HepG2 (cell line): ENCODE measurements at regions of chr14 and their contacts with region 1.

Region 1: DNA sequence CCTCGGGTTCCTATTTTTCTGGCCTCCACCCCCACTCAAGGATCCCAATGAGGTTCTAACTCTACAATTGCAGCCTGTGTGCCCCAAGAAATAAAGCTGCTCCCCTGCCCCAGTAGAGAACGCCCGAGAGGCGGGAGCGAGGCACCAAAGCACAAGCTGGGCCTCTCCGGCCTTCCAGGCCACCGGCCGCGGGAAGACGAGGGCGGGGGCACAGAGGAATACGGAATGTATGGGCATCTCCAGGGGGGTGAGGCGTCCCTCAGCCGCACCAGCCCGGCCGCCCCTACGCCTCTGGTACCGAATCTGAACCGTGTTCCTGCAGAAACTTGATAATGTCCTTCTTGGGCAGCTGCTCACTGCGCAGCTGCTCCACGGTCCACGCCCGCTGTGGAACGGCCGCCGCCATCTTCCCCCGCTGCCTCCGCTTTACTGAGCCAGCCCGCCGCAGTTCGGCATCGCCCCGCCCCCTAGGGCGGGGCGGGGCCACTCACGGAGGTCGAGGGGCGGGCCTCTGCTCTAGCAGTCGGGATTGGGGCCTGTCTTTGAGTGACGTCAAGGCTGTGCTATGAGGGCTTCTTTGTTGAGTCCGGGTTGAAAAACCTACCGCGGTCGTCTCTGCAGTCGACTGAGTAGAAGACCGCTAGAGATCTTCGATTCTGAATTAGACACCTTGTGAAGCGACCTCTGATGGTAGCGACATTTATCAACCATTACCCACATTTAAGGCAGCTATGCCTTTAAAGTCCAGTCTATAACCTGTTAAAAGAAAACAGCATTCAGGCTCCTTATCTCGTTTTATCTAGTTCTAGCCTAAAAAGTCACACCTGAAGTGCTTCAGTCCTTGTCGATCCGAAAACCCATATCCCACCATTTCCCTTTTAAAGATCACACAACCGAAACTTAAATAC is at the start of gene FKBP3:
- DNase-seq: peak; percentile 99
- ATAC-seq: peak; percentile 90
- H3K4me3 ChIP-seq: peak within 1 kb of the TSS; percentile 87 to 95 (median 91)
- H3K27ac ChIP-seq: peak within 1 kb of the TSS; percentile 90
- H3K4me1 ChIP-seq: peaks cover 45% of the 10 kb centered on the region
- H3K27me3 ChIP-seq: no peaks in the 10 kb centered on the region; a peak in 2 of 5 replicates
- CTCF ChIP-seq: peak; percentile 60
- EP300 ChIP-seq: peak; percentile 5 to 14; a peak in 2 of 4 replicates
- POLR2A ChIP-seq: peak; percentile 83 to 89
- RAD21 ChIP-seq: 0 out of 2 replicates have a peak, but pooled peaks have one; percentile 22
- total RNA-seq, gene FKBP3: 87.6 and 140 TPM in 2 replicates

Region 2: DNA sequence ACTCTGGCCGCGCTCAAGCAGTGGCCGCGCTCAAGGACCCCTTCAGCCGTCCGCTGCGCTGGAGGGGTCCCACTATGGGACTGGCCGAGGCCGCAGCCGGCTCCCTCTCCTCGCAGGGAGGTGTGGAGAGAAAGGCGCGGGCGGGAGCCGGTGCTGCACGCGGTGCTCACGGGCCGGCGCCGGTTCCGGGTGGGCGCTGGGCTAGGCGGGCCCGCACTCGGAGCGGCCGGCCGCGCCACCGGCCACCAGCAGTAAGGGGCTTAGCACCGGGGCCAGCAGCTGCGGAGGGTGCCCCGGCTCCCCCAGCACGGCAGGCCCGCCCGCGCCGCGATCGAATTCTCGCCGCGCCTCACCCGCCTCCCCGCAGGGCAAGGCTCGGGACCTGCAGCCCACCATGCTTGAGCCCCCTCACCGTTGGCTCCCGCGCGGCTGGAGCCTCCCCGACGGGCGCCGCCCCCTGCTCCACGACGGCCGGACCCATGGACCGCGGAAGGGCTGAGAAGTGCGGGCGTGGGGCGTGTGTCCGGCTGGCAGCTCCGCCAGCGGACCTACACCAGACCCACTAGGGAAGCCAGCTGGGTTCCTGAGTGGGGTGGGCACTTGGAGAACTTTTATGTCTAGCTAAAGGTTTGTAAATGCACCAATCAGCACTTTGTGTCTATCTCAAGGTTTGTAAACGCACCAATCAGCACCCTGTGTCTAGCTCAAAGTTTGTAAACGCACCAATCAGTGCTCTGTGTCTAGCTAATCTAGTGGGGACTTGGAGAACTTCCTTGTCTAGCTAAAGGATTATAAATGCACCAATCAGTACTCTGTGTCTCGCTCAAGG is 222.1 kb before region 1 on chr14:
- CTCF ChIA-PET with region 1: no interaction called
- POLR2A ChIA-PET with region 1: interaction called, 23 read pairs
- in situ Hi-C with region 1: no loop called
- intact Hi-C with region 1: loop called (anchors 1 kb)
- DNase-seq: no peak
- ATAC-seq: no peak
- H3K4me3 ChIP-seq: no peak overlapping the region
- H3K27ac ChIP-seq: no peak overlapping the region
- H3K4me1 ChIP-seq: peaks cover 12% of the 10 kb centered on the region
- H3K27me3 ChIP-seq: no peaks in the 10 kb centered on the region; a peak in 1 of 5 replicates
- CTCF ChIP-seq: no peak
- EP300 ChIP-seq: no peak
- POLR2A ChIP-seq: no peak
- RAD21 ChIP-seq: no peak

Region 3: DNA sequence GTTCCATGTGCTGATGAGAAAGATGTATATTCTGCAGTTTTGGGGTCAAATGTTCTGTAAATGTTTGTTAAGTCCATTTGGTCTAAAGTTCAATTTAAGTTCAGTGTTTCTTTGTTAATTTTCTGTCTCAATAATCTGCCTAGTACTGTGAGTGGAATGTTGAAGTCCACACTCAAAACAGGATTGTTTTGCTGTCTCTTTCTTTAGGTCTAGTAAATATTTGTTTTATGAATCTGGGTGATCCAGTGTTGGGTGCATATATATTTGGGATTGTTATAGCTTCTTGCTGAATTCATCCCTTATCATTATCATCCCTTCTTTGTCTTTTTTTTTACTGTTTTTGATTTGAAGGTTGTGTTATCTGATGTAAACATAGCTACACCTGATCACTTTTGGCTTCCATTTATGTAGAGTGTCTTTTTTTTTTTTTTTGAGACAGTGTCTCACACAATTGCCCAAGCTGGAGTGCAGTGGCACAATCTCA is 76.4 kb before region 1 on chr14:
- CTCF ChIA-PET with region 1: no interaction called
- POLR2A ChIA-PET with region 1: no interaction called
- in situ Hi-C with region 1: no loop called
- intact Hi-C with region 1: loop called (anchors 2 kb)
- DNase-seq: peak; percentile 82
- ATAC-seq: peak; percentile 96
- H3K4me3 ChIP-seq: no peak overlapping the region; a peak in 1 of 6 replicates
- H3K27ac ChIP-seq: peak overlapping the region; percentile 55
- H3K4me1 ChIP-seq: peaks cover 34% of the 10 kb centered on the region
- H3K27me3 ChIP-seq: no peaks in the 10 kb centered on the region
- CTCF ChIP-seq: no peak
- EP300 ChIP-seq: peak in 1 of 2 experiments; percentile 59; a peak in 1 of 4 replicates
- POLR2A ChIP-seq: no peak
- RAD21 ChIP-seq: no peak

Region 4: GRCh38 chr14:45112889-45113781 is 21.2 kb before region 1 on chr14:
- CTCF ChIA-PET with region 1: no interaction called
- POLR2A ChIA-PET with region 1: interaction called, 16 read pairs
- in situ Hi-C with region 1: no loop called
- intact Hi-C with region 1: loop called (anchors 2 kb)
- DNase-seq: peak; percentile 53
- ATAC-seq: peak; percentile 76
- H3K4me3 ChIP-seq: no peak overlapping the region; a peak in 1 of 6 replicates
- H3K27ac ChIP-seq: peak overlapping the region; percentile 35
- H3K4me1 ChIP-seq: peaks cover 34% of the 10 kb centered on the region
- H3K27me3 ChIP-seq: no peaks in the 10 kb centered on the region
- CTCF ChIP-seq: no peak
- EP300 ChIP-seq: no peak
- POLR2A ChIP-seq: no peak
- RAD21 ChIP-seq: no peak

Region 5: DNA sequence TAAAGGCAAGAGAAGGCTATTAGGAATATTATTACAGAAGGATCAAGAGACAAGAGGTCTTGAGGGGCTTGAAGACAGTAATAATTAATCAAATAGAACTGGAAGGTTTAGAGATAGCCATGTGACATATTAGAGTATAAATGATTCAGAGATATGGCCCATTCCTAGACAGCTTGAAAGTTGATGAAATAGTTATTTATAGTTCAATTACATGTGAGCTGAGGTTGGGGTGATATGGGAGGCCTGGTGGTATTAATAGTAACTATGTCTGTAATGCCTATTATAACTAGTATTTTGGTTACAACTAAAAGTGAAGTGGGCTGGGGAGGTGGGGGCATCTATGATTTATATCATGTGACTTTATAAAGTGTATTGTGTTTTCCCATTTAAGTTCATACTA is 132.8 kb after region 1 on chr14:
- CTCF ChIA-PET with region 1: no interaction called
- POLR2A ChIA-PET with region 1: no interaction called
- in situ Hi-C with region 1: no loop called
- intact Hi-C with region 1: loop called (anchors 5 kb)
- DNase-seq: no peak
- ATAC-seq: no peak
- H3K4me3 ChIP-seq: no peak overlapping the region
- H3K27ac ChIP-seq: no peak overlapping the region
- H3K4me1 ChIP-seq: no peaks in the 10 kb centered on the region
- H3K27me3 ChIP-seq: 0 out of 5 replicates have a peak, but pooled peaks cover 0 to 3% of the 10 kb centered on the region in 2 experiments
- CTCF ChIP-seq: no peak
- EP300 ChIP-seq: no peak
- POLR2A ChIP-seq: no peak
- RAD21 ChIP-seq: no peak